ENCODE measurements at regions of chr9 and their contacts with region 1.

Region 1: GRCh38 chr9:120619751-120620655 is 40.0 kb upstream of the CDK5RAP2 start:
- H3K4me3 ChIP-seq: no peak overlapping the region
- H3K27ac ChIP-seq: no peak overlapping the region
- H3K4me1 ChIP-seq: peaks cover 3% of the 10 kb centered on the region; the same call in 1 of the 2 replicates
- CTCF ChIP-seq: 0 out of 2 replicates have a peak, but pooled peaks have one; percentile 27

Region 2: GRCh38 chr9:120490888-120491595 is 129.0 kb before region 1 on chr9:
- CTCF ChIA-PET with region 1: no interaction called
- POLR2A ChIA-PET with region 1: no interaction called
- H3K4me3 ChIP-seq: no peak overlapping the region
- H3K27ac ChIP-seq: no peak overlapping the region
- H3K4me1 ChIP-seq: no peaks in the 10 kb centered on the region
- CTCF ChIP-seq: no peak

Region 3: DNA sequence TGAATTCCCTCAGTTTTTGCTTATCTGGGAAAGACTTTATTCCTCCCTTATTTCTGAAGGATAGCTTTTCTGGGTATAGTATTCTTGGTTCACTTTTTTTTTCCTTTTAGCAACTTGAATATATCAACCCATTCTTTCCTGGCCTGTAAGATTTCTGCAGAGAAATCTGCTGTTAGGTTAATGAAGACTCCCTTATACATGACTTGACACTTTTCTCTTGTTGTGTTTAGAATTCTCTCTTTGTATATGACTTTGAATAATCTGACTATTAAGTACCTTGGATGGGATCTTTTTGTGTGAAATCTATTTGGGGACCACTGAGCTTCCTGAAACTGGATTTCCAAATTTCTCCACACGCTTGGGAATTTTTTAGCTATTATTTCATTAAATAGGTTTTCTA is 15.0 kb after region 1 on chr9:
- CTCF ChIA-PET with region 1: interaction called, 12 read pairs
- POLR2A ChIA-PET with region 1: no interaction called
- H3K4me3 ChIP-seq: no peak overlapping the region
- H3K27ac ChIP-seq: no peak overlapping the region
- H3K4me1 ChIP-seq: no peaks in the 10 kb centered on the region
- CTCF ChIP-seq: no peak

Region 4: DNA sequence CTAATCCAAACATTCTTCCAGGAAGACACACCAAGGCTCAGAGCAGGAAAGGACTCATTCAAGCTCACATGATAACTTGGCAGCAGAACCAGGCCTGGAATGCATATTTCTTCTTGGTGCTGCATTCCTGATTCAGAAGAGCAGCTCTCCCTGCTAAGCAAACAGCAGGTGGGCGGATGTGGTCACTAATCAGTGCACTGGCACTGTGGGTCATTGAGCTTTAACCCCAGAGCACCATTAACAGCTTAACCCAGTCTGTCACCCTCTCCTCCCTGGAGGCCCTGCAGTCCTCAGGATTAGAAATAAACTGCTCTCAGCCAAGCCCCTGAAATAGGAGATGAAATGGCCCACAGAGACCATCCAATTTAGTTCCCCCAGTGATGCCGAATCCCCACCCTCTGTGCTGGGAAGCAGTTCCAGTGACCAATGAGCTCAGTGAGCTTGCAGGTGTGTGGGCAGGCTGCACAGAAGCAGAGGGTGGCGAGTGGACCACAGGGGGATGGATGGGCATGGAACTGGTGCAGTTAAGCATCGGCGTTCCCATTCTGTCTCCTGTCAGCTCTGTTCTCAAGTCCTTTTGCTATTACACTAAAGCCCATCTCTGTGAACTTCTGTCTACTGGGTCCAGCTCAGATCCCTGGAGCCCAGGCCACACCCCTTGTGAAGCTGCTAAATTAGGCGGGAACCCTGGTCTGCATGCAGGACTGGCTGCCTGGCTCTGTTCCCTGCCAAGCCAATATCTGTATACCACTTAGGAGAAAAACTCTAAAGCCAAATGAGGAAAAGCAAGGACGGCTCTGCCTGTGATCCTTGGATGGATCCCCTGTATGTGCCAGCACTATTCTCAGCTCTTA is 110.9 kb after region 1 on chr9:
- CTCF ChIA-PET with region 1: interaction called, 7 read pairs
- POLR2A ChIA-PET with region 1: interaction called, 10 read pairs
- H3K4me3 ChIP-seq: no peak overlapping the region
- H3K27ac ChIP-seq: no peak overlapping the region
- H3K4me1 ChIP-seq: no peaks in the 10 kb centered on the region
- CTCF ChIP-seq: no peak

Region 5: DNA sequence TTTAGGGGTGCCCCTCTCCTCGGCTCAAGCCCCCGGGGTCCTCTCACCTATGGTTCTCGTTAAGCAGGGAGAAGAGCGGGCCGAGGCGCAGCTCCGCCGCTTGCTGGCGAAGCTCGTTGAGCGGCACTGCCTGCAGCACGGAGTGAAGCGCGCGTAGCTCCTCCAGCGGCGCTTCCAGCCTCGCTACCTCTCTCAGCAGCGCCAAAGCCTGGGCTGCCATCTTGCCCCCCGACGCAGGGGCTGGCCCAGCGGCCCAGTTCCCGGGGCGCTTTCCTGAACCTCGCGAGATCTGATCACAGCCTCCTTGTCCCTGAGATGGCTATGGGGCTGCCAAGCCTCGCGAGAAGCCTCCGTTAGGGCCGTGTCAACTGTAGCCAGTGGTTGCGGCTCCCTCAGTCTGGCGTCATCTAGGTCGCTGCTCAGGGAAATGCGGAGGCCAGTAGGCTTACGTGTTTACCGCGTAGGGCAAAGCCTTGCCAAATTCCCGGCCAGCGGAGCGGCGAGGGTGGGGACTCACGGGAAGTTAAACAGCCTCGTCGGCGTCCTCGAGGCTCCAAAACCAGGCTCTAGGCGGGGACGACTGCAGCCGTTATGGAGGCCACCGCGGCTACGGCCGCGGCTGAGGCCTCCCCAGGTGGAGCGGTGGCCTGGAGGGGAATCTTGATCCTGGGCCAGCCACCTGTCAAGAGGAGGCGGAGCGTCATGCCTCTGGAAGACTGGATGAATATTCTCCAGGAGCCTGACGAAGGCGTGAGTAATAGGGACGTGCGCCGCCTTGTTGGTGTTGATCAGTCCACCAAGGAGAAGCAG is 222.9 kb after region 1 on chr9 and contains the start of gene PSMD5:
- CTCF ChIA-PET with region 1: no interaction called
- POLR2A ChIA-PET with region 1: no interaction called
- H3K4me3 ChIP-seq: peak within 1 kb of the TSS; percentile 55
- H3K27ac ChIP-seq: no peak within 1 kb of the TSS; the same call in 1 of the 2 replicates
- H3K4me1 ChIP-seq: no peaks in the 10 kb centered on the region
- CTCF ChIP-seq: no peak